Prostate gland (tissue), 2 donors: ENCODE measurements at regions of chr15 and their contacts with region 1.

Region 1: DNA sequence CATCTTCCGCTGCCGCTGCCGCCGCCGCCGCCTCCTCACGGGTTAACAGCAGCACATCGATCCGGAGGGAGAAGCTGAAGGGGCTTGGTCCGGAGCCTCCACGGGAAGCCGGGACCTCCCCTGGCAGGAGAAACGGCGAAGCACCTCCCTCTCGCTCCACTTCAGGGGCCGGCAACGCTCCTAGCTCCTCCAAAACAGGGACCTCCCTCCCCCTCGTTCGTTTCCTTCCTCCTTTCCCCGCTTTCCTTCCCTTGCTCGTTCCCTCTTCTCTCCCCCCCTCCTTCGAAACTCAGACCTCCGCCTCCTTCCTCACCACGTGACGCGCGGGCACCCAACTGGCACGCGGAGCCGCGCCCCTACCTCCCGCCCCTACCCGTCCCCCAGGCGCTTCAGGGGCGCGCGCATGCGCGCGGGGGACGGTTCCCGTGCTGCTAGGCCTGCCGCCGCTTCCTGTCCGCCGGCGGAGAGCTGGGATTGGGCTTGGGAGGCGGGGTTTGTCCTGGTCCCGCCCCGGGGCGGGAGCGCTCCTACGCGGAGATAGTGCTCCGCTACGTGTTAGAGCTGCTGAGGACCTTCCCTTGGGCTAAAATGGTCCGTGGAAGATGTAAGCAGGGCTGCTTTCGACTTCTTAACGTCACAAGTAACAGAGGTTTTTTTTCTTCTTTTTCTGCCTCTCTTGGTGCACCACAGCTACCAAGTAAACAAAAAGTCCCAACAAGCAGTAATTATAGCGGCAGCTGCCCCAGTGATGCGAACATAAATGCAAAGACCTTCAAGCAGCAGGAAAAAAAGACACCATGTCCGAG is at the start of gene ADAM10:
- DNase-seq: peak; percentile 99
- H3K4me3 ChIP-seq: peak within 1 kb of the TSS; percentile 94
- H3K27ac ChIP-seq: peak within 1 kb of the TSS; percentile 98 to 99
- H3K4me1 ChIP-seq: no peaks in the 10 kb centered on the region
- H3K27me3 ChIP-seq: no peaks in the 10 kb centered on the region
- CTCF ChIP-seq: peak in 2 of 4 experiments; percentile 13 to 14
- POLR2A ChIP-seq: peak; percentile 93
- total RNA-seq, gene ADAM10: 74.4 to 95.0 TPM

Region 2: GRCh38 chr15:58770857-58771620 is 21.3 kb after region 1 on chr15 and contains the start of gene MINDY2:
- intact Hi-C with region 1: loop called (anchors 2 kb)
- DNase-seq: peak; percentile 99
- H3K4me3 ChIP-seq: peak within 1 kb of the TSS; percentile 61 to 91
- H3K27ac ChIP-seq: peak within 1 kb of the TSS; percentile 93 to 99
- H3K4me1 ChIP-seq: peaks cover 3% of the 10 kb centered on the region
- H3K27me3 ChIP-seq: no peaks in the 10 kb centered on the region
- CTCF ChIP-seq: peak in 3 of 4 experiments; percentile 21 to 40 (median 33)
- POLR2A ChIP-seq: peak; percentile 99
- total RNA-seq, gene MINDY2: 14.3 to 22.9 TPM